ENCODE measurements at regions of chr17 and their contacts with region 1.

Region 1: DNA sequence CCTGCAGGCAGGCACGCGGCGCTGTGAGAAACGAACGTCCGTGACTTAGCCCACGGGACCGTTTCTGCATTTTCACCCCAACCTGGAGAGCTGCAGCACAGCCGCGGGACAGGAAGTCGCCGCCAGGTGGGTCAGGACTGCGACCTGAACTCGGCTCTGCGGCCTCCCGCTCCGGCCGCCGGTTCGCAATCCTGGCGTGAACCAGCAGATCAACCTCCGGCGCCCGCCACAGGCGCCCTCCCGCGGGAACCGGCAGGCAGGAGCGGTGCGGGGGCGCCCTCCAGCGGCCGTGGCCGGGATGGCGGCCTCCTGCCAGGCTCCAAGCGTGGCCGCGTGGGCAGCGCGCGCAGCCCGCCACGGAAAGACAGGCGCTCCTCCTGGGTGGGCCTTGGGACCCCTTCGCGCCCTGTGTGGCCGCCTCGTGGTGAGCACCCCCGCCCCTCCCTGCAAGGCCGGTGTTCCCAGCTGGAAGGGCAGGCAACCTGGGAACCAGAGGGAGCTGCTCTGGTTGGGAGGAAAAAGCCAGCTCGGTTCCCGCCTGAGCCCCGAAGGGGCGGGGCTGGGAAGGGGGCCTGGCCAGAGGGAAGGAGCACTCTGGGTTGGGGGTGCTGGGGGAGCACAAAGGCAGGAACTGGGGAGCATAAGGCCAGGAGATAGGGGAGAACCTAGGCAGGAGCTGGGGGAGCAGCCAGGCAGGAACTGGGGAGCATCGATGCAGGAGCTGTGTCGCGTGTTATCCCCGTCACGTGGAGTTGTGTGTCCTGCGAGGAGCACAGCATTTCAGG is 28.2 kb downstream of the ACTG1 start:
- DNase-seq: peak; percentile 86
- H3K4me3 Mint-ChIP-seq: no peak overlapping the region
- H3K27ac Mint-ChIP-seq: no peak overlapping the region
- H3K4me1 Mint-ChIP-seq: no peaks in the 10 kb centered on the region
- H3K27me3 Mint-ChIP-seq: peaks cover 30% of the 10 kb centered on the region

Region 2: DNA sequence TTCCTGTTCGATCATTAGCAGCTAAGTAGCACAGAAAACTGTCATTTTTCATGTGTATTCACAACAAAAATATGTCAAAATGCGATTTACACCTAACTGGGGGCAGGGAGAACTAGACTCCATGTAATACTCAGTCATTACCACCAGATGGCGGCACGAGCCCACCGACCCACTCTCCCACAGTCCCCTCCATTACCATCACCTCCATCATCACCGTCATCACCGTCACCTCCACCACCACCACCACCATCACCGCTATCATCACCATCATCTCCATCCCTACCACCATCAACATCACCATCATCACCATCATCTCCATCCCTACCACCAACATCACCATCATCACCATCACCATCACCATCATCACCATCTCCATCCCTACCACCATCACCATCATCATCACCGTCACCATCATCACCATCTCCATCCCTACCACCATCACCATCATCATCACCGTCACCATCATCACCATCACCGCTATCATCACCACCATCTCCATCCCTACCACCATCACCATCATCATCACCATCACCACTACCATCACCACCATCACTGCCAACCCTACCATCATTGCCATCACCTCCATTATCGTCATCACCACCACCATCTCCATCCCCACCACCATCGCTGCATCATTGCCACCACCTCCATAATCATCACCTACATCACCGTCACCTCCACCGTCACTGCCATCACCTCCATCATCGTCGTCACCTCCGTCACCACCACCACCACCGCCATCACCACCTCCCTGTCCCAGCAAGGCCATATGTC is 230.8 kb before region 1 on chr17:
- intact Hi-C with region 1: loop called (anchors 1 kb)
- DNase-seq: peak; percentile 38
- H3K4me3 Mint-ChIP-seq: no peak overlapping the region
- H3K27ac Mint-ChIP-seq: peak overlapping the region; percentile 14
- H3K4me1 Mint-ChIP-seq: no peaks in the 10 kb centered on the region
- H3K27me3 Mint-ChIP-seq: no peaks in the 10 kb centered on the region

Region 3: DNA sequence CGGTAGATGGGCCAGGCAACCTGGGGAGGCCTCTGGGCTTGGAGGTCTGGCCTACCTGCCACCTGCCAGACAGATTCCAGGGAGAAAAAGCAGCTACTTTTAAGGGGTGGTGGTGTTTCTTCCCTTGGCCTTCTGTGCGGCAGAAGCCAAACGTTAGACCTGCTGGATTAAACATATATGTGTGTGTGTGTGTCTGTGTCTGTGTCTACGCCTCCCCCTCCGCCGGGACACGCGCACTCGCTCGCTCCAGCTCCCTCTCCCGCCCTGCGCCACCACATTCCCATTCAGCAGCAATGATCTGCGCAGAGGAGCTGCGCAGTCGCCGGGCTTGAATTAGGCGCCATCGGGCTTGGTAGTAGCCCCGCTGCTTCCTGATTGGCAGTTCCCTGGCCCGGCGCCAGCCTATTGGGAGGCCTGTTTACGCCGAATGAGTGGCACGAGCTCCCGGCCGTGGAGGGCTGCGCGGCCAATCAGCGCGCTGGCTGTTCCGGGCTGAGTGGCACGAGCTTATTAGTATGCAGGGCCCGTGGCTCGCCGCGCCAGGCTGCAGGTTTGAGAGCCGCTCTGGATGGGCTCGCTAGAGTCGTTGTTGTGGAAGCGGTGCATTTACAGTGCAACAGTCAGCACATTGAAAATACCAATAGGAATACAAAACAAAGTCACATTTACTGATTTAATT is 89.3 kb before region 1 on chr17 and contains the start of gene BAHCC1:
- intact Hi-C with region 1: loop called (anchors 2 kb)
- DNase-seq: peak; percentile 62
- H3K4me3 Mint-ChIP-seq: peak within 1 kb of the TSS; percentile 74
- H3K27ac Mint-ChIP-seq: peak within 1 kb of the TSS; percentile 63
- H3K4me1 Mint-ChIP-seq: peaks cover 20% of the 10 kb centered on the region
- H3K27me3 Mint-ChIP-seq: peaks cover 43% of the 10 kb centered on the region
- total RNA-seq, gene BAHCC1: 0.02 and 0.08 TPM in 2 replicates

Measured in activated T-helper 1 cell treated with anti-CD3 and anti-CD28 coated beads, Interleukin-12 subunit alpha, Interleukin-12 subunit beta, Interleukin-2, Interleukin-4 antibody, amounts not matched to agents 30 ng/mL and 10 ng/mL and 1 ng/mL, durations not matched to agents 14 hours and 24 hours and 36 hours (primary cell).